Activated CD4-positive, alpha-beta memory T cell treated with anti-CD3 and anti-CD28 coated beads, Interleukin-2, amount 10 ng/mL, durations not matched to agents 7 days and 5 days (primary cell): ENCODE measurements at regions of chr15 and their contacts with region 1.

Region 1: GRCh38 chr15:41811432-41812195 is 16.3 kb upstream of the JMJD7 start:
- DNase-seq: peak; percentile 78
- H3K4me3 Mint-ChIP-seq: no peak overlapping the region
- H3K27ac Mint-ChIP-seq: peak overlapping the region; percentile 47
- H3K4me1 Mint-ChIP-seq: peaks cover 42% of the 10 kb centered on the region
- H3K27me3 Mint-ChIP-seq: no peaks in the 10 kb centered on the region

Region 2: GRCh38 chr15:41603941-41604911 is 207.4 kb before region 1 on chr15:
- CTCF ChIA-PET with region 1: interaction called, 13 read pairs
- POLR2A ChIA-PET with region 1: interaction called, 3 read pairs
- DNase-seq: peak; percentile 50
- H3K4me3 Mint-ChIP-seq: peak overlapping the region; percentile 33
- H3K27ac Mint-ChIP-seq: no peak overlapping the region
- H3K4me1 Mint-ChIP-seq: peaks cover 9% of the 10 kb centered on the region
- H3K27me3 Mint-ChIP-seq: peaks cover 39% of the 10 kb centered on the region

Region 3: GRCh38 chr15:41695750-41696426 is 115.7 kb before region 1 on chr15:
- CTCF ChIA-PET with region 1: interaction called, 18 read pairs
- POLR2A ChIA-PET with region 1: no interaction called
- DNase-seq: peak; percentile 66
- H3K4me3 Mint-ChIP-seq: peak overlapping the region; percentile 5
- H3K27ac Mint-ChIP-seq: peak overlapping the region; percentile 49
- H3K4me1 Mint-ChIP-seq: peaks cover 39% of the 10 kb centered on the region
- H3K27me3 Mint-ChIP-seq: no peaks in the 10 kb centered on the region

Region 4: DNA sequence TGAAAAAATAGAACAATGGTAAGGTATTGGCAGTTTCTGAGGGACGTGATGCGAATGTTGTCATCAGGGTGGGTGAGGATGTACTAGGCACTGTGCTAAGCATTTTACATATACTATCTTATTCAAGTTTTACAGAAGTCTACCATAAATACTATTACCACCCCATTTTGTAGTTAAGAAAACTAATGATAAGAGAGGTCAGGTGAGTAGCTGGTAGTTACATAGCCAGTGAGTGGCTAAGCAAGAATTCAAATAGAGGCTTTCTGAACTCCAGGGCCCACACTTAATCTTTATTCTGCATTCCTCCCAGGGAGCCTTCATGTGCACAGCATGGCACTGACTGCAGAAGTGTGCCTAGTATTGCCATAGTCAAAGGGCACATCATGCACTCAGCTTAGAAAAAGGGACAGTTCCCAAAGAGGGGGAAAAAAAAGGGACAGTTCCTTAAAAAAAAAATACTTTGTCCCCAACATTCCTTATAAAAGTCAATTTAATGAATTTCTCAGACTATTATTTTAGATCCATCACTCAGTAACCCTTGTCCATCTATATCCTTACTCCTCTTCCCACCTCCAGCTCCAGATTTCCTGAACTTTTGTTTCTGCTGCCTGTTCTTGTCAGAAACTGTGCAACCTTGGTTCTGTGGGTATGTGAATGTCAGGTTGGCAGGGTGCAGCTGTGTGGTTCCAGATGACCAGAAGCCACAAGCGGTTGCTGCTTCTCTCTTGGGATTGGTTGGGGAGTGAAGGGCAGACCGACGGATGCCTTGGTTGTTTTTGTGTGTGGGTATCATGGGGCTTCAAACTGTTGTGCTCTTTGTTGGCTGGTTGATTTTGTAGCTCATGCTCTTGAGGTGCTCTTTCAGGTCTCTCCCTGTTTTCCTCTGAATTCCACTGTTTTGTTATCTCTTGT is 29.0 kb before region 1 on chr15:
- CTCF ChIA-PET with region 1: interaction called, 270 read pairs
- POLR2A ChIA-PET with region 1: interaction called, 59 read pairs
- DNase-seq: no peak
- H3K4me3 Mint-ChIP-seq: no peak overlapping the region
- H3K27ac Mint-ChIP-seq: no peak overlapping the region
- H3K4me1 Mint-ChIP-seq: peaks cover 40% of the 10 kb centered on the region
- H3K27me3 Mint-ChIP-seq: no peaks in the 10 kb centered on the region

Region 5: GRCh38 chr15:41790756-41791546 is 20.7 kb before region 1 on chr15:
- CTCF ChIA-PET with region 1: interaction called, 45 read pairs
- POLR2A ChIA-PET with region 1: interaction called, 4 read pairs
- DNase-seq: peak; percentile 30
- H3K4me3 Mint-ChIP-seq: peak overlapping the region; percentile 1
- H3K27ac Mint-ChIP-seq: peak overlapping the region; percentile 70
- H3K4me1 Mint-ChIP-seq: peaks cover 53% of the 10 kb centered on the region
- H3K27me3 Mint-ChIP-seq: no peaks in the 10 kb centered on the region

Region 6: DNA sequence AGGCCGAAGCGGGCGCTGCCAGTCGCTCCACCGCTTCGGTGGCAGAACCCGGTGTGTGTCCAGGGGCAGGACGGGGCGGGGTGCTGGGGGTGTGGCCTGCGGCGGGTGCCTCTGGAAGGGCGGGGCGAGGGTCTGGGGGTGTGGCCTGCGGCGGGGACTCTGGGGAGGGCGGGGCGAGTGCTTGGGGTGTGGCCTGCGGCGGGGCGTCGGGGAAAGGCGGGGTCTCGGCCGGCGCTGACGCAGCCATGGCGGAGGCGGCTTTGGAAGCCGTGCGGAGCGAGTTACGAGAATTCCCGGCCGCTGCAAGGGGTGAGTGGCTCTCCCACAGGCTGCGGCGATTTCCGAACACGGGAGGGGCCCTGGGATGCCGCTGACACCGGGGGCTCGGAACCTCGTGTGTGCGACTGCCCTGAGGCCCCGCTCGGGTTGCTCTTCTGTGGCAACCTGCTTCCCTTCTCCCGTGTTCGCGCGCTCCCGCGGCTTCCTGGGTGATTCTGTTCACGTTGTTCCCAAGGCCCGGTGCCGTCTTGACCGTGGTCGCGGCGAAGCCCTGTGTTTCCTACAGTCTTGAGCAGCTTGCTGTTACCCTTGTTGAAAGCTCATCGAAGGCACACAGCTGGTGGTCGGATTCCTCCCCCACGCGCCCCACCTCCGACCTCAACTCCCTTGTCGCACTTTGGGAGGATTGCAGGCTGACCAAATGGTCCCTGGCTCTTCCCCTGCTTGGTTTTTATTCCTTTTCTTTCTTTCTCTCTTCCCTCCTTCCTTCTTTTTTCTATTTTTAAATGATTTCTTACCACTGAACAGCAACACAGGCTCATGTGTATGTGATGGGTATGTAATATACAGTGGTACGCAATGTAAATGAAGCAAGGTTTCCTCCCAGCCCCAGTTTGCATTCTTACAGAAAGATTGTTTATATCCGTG is 16.5 kb after region 1 on chr15 and contains the start of gene JMJD7:
- CTCF ChIA-PET with region 1: interaction called, 12 read pairs
- POLR2A ChIA-PET with region 1: interaction called, 15 read pairs
- DNase-seq: peak; percentile 94
- H3K4me3 Mint-ChIP-seq: peak within 1 kb of the TSS; percentile 76
- H3K27ac Mint-ChIP-seq: peak within 1 kb of the TSS; percentile 17
- H3K4me1 Mint-ChIP-seq: peaks cover 48% of the 10 kb centered on the region
- H3K27me3 Mint-ChIP-seq: peaks cover 3% of the 10 kb centered on the region
- total RNA-seq, gene JMJD7: 18.2 to 22.4 TPM

Region 7: GRCh38 chr15:41839781-41840491 is 28.3 kb after region 1 on chr15:
- CTCF ChIA-PET with region 1: no interaction called
- POLR2A ChIA-PET with region 1: no interaction called
- DNase-seq: no peak
- H3K4me3 Mint-ChIP-seq: no peak overlapping the region
- H3K27ac Mint-ChIP-seq: no peak overlapping the region
- H3K4me1 Mint-ChIP-seq: no peaks in the 10 kb centered on the region
- H3K27me3 Mint-ChIP-seq: no peaks in the 10 kb centered on the region

Region 8: GRCh38 chr15:41852736-41853590 is 41.3 kb after region 1 on chr15:
- CTCF ChIA-PET with region 1: no interaction called
- POLR2A ChIA-PET with region 1: no interaction called
- DNase-seq: no peak
- H3K4me3 Mint-ChIP-seq: no peak overlapping the region
- H3K27ac Mint-ChIP-seq: no peak overlapping the region
- H3K4me1 Mint-ChIP-seq: no peaks in the 10 kb centered on the region
- H3K27me3 Mint-ChIP-seq: no peaks in the 10 kb centered on the region

Region 9: GRCh38 chr15:41904541-41905005 is 93.0 kb after region 1 on chr15:
- CTCF ChIA-PET with region 1: interaction called, 15 read pairs
- POLR2A ChIA-PET with region 1: interaction called, 3 read pairs
- DNase-seq: peak; percentile 80
- H3K4me3 Mint-ChIP-seq: no peak overlapping the region
- H3K27ac Mint-ChIP-seq: peak overlapping the region; percentile 52
- H3K4me1 Mint-ChIP-seq: peaks cover 13% of the 10 kb centered on the region
- H3K27me3 Mint-ChIP-seq: no peaks in the 10 kb centered on the region